Activated CD4-positive, alpha-beta T cell treated with anti-CD3 and anti-CD28 coated beads for 36 hours (primary cell): ENCODE measurements at regions of chr6 and their contacts with region 1.

Region 1: DNA sequence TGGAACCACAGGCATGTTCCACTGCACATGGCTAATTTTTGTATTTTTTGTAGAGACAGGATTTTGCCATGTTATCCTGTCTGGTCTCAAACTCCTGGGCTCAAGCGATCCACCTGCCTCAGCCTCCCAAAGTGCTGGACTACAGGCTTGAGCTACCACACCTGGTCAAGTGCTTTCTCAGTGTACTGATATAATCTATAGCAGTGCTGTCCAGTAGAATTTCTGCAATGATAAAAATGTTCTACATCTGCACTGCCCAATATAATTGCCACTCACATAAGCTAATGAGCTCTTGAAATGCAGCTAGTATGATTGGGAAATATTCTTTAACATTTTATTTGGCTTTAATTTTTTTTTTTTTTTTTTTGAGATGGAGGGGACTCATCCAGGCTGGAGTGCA is 64.2 kb downstream of the C6orf52 start:
- DNase-seq: no peak
- ATAC-seq: no peak
- H3K4me3 Mint-ChIP-seq: no peak overlapping the region
- H3K27ac Mint-ChIP-seq: no peak overlapping the region
- H3K4me1 Mint-ChIP-seq: peaks cover 5% of the 10 kb centered on the region
- H3K27me3 Mint-ChIP-seq: peaks cover 2% of the 10 kb centered on the region

Region 2: DNA sequence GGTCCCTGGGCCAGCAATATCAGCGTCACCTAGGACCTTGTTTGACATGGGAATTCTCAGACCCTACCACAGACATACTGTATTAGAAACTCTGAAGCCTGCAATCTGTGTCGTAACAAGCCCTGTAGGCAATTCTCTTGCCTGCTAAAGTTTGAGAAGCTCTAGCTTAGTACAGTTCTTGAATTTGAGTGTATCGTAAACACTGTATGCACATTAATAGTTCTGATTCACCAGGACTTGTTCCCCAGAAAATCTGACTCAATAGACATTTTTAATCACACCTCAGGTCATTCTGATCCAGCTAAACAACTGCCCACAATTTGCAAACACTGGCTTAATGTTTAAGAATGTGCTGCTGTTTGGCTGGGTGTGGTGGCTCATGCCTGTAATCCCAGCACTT is 629.6 kb before region 1 on chr6:
- CTCF ChIA-PET with region 1: no interaction called
- POLR2A ChIA-PET with region 1: no interaction called
- intact Hi-C with region 1: no loop called
- DNase-seq: no peak
- ATAC-seq: no peak
- H3K4me3 Mint-ChIP-seq: no peak overlapping the region
- H3K27ac Mint-ChIP-seq: no peak overlapping the region
- H3K4me1 Mint-ChIP-seq: no peaks in the 10 kb centered on the region
- H3K27me3 Mint-ChIP-seq: no peaks in the 10 kb centered on the region

Region 3: GRCh38 chr6:10640412-10640811 is 10.2 kb after region 1 on chr6:
- CTCF ChIA-PET with region 1: interaction called, 6 read pairs
- POLR2A ChIA-PET with region 1: interaction called, 10 read pairs
- intact Hi-C with region 1: no loop called
- DNase-seq: no peak
- ATAC-seq: no peak
- H3K4me3 Mint-ChIP-seq: no peak overlapping the region
- H3K27ac Mint-ChIP-seq: no peak overlapping the region
- H3K4me1 Mint-ChIP-seq: peaks cover 6% of the 10 kb centered on the region
- H3K27me3 Mint-ChIP-seq: peaks cover 6% of the 10 kb centered on the region